Activated CD4-positive, alpha-beta memory T cell treated with anti-CD3 and anti-CD28 coated beads, Interleukin-2, amount 10 ng/mL, durations not matched to agents 7 days and 5 days (primary cell): ENCODE measurements at regions of chr7 and their contacts with region 1.

Region 1: DNA sequence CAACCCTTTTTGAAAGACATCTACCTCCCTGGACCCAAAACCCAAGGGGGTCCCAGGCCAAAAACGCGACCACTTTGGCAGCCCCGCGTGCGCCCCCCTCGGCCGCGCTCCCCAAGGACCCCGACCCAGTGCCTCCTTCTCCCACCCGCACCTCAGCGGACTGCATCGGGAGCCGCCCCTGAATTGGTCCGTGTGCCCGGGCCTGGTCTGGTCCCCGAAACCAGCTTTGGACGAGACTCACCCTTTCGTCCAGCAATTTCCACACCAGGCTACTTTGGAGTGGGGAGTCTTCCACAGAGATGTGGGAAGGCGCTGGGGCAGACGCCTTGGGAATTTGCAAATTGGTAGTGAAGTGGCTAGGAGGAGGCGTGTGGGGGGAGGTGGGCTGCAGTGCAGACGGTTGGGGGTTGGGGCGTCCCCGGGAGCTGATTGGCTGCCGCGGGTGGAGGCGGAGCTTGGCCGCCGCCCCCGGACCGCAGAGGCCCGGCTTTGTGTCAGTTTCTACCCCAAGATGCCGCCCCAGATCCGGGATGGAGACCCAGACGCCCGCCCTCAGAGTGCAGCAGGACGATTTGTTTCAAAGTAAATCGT is 16.9 kb downstream of the TCAF1 start:
- DNase-seq: no peak
- H3K4me3 Mint-ChIP-seq: no peak overlapping the region
- H3K27ac Mint-ChIP-seq: no peak overlapping the region
- H3K4me1 Mint-ChIP-seq: peaks cover 13% of the 10 kb centered on the region
- H3K27me3 Mint-ChIP-seq: peaks cover 27% of the 10 kb centered on the region

Region 2: GRCh38 chr7:143901668-143902331 is 16.7 kb after region 1 on chr7 and contains the start of gene TCAF1:
- CTCF ChIA-PET with region 1: interaction called, 55 read pairs
- POLR2A ChIA-PET with region 1: interaction called, 7 read pairs
- DNase-seq: peak; percentile 90
- H3K4me3 Mint-ChIP-seq: peak within 1 kb of the TSS; percentile 92
- H3K27ac Mint-ChIP-seq: peak within 1 kb of the TSS; percentile 73
- H3K4me1 Mint-ChIP-seq: peaks cover 25% of the 10 kb centered on the region
- H3K27me3 Mint-ChIP-seq: no peaks in the 10 kb centered on the region
- total RNA-seq, gene TCAF1: 24.7 to 25.2 TPM